ENCODE measurements at regions of chr10 and their contacts with region 1.

Region 1: GRCh38 chr10:62244780-62245467 is 23.7 kb downstream of the RTKN2 start:
- DNase-seq: no peak
- ATAC-seq: peak; percentile 87
- H3K4me3 ChIP-seq: no peak overlapping the region
- H3K27ac ChIP-seq: no peak overlapping the region
- H3K4me1 ChIP-seq: no peaks in the 10 kb centered on the region
- H3K27me3 ChIP-seq: no peaks in the 10 kb centered on the region

Region 2: GRCh38 chr10:61896854-61897661 is 347.9 kb before region 1 on chr10:
- intact Hi-C with region 1: loop called (anchors 2 to 5 kb)
- DNase-seq: peak; percentile 76 to 81
- ATAC-seq: peak; percentile 84
- H3K4me3 ChIP-seq: peak overlapping the region in 1 of 2 donors; percentile 6
- H3K27ac ChIP-seq: peak overlapping the region in 1 of 2 donors; percentile 4
- H3K4me1 ChIP-seq: peaks cover 0 to 1% of the 10 kb centered on the region in 2 donors
- H3K27me3 ChIP-seq: no peaks in the 10 kb centered on the region

Region 3: GRCh38 chr10:62038609-62039190 is 206.2 kb before region 1 on chr10:
- intact Hi-C with region 1: loop called in 1 of 2 experiments (anchors 2 kb)
- DNase-seq: peak; percentile 74 to 84
- ATAC-seq: peak; percentile 76
- H3K4me3 ChIP-seq: peak overlapping the region in 1 of 2 donors; percentile 26
- H3K27ac ChIP-seq: peak overlapping the region; percentile 44 to 64
- H3K4me1 ChIP-seq: peaks cover 5 to 8% of the 10 kb centered on the region in 2 donors
- H3K27me3 ChIP-seq: no peaks in the 10 kb centered on the region

Region 4: GRCh38 chr10:62048919-62049623 is 195.9 kb before region 1 on chr10:
- intact Hi-C with region 1: loop called in 1 of 2 experiments (anchors 5 kb)
- DNase-seq: peak; percentile 91 to 94
- ATAC-seq: peak; percentile 90
- H3K4me3 ChIP-seq: peak overlapping the region; percentile 14 to 99
- H3K27ac ChIP-seq: peak overlapping the region; percentile 87 to 96
- H3K4me1 ChIP-seq: peaks cover 7 to 9% of the 10 kb centered on the region in 2 donors
- H3K27me3 ChIP-seq: no peaks in the 10 kb centered on the region

Region 5: GRCh38 chr10:62095181-62096071 is 149.5 kb before region 1 on chr10:
- intact Hi-C with region 1: loop called in 1 of 2 experiments (anchors 10 kb)
- DNase-seq: no peak
- ATAC-seq: peak; percentile 64
- H3K4me3 ChIP-seq: no peak overlapping the region
- H3K27ac ChIP-seq: peak overlapping the region in 1 of 2 donors; percentile 58
- H3K4me1 ChIP-seq: peaks cover 0 to 17% of the 10 kb centered on the region in 2 donors
- H3K27me3 ChIP-seq: no peaks in the 10 kb centered on the region

Region 6: GRCh38 chr10:62268399-62269114 is 23.6 kb after region 1 on chr10 and contains the start of gene RTKN2:
- intact Hi-C with region 1: no loop called
- DNase-seq: peak; percentile 79 to 84
- ATAC-seq: peak; percentile 84
- H3K4me3 ChIP-seq: peak within 1 kb of the TSS; percentile 58 to 63
- H3K27ac ChIP-seq: no peak within 1 kb of the TSS
- H3K4me1 ChIP-seq: peaks cover 0 to 3% of the 10 kb centered on the region in 2 donors
- H3K27me3 ChIP-seq: no peaks in the 10 kb centered on the region
- total RNA-seq, gene RTKN2: 0.21 to 0.29 TPM

Region 7: GRCh38 chr10:62297857-62298256 is 52.9 kb after region 1 on chr10:
- intact Hi-C with region 1: no loop called
- DNase-seq: no peak
- ATAC-seq: no peak
- H3K4me3 ChIP-seq: no peak overlapping the region
- H3K27ac ChIP-seq: no peak overlapping the region
- H3K4me1 ChIP-seq: no peaks in the 10 kb centered on the region
- H3K27me3 ChIP-seq: no peaks in the 10 kb centered on the region

Measured in aorta (tissue), 5 donors.